Gastrocnemius medialis (tissue), 4 donors: ENCODE measurements at regions of chr18 and their contacts with region 1.

Region 1: DNA sequence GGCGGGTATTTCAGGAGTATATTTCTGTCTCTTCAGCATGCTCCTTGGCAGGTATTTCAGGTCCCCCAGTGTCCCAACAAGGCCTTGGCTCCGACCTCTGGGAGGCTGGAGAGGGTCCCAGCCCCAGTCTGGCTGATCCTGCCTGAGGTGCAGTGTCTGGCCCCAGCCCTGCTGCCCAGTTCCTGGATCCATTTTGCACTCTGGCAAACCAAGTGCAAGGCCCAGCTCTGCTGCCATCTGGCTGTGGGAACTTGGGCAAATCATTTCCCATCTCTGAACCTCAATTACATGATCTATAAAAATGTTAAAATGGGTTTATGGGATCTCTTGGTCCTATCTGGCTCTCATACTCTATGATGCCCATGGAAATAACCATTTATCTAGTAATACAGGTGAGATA is 63.6 kb downstream of the ZBTB7C start:
- DNase-seq: no peak
- ATAC-seq: no peak
- H3K4me3 ChIP-seq: no peak overlapping the region
- H3K27ac ChIP-seq: no peak overlapping the region
- H3K4me1 ChIP-seq: peaks cover 0 to 5% of the 10 kb centered on the region in 2 donors
- H3K27me3 ChIP-seq: no peaks in the 10 kb centered on the region
- CTCF ChIP-seq: peak in 3 of 5 experiments; percentile 21 to 47 (median 34)
- POLR2A ChIP-seq: no peak

Region 2: DNA sequence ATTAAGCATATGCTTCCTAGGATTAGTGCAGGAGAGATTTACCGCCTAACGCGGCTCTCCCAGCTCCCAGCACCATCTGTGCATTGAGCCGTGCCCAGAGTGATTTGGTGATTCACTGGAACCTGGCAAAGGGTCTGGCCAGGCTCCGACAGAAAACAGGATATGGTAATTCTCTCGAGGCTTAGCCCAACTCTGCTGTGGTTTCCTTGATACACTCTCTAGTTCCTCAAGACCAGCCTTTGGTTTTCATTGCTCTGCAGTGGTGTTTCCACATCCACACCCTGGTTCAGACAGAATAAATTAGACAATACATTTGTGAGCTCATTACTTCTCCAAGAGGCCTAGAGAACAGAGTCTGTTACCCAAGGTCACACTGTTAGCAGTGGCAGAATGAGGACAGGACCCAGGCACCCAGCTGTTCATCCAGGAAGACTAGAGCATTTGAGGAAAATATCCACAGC is 392.1 kb before region 1 on chr18:
- in situ Hi-C with region 1: no loop called
- intact Hi-C with region 1: no loop called
- DNase-seq: peak; percentile 9 to 31
- ATAC-seq: peak in 1 of 2 donors; percentile 80
- H3K4me3 ChIP-seq: no peak overlapping the region
- H3K27ac ChIP-seq: no peak overlapping the region
- H3K4me1 ChIP-seq: peaks cover 0 to 8% of the 10 kb centered on the region in 2 donors
- H3K27me3 ChIP-seq: no peaks in the 10 kb centered on the region
- CTCF ChIP-seq: no peak
- POLR2A ChIP-seq: no peak

Region 3: GRCh38 chr18:48030616-48031480 is 314.7 kb before region 1 on chr18:
- in situ Hi-C with region 1: loop called in 1 of 4 experiments (anchors 10 kb)
- intact Hi-C with region 1: no loop called
- DNase-seq: peak in 1 of 2 donors; percentile 25
- ATAC-seq: peak; percentile 73 to 79
- H3K4me3 ChIP-seq: no peak overlapping the region
- H3K27ac ChIP-seq: no peak overlapping the region
- H3K4me1 ChIP-seq: no peaks in the 10 kb centered on the region
- H3K27me3 ChIP-seq: no peaks in the 10 kb centered on the region
- CTCF ChIP-seq: peak; percentile 39 to 65 (median 54)
- POLR2A ChIP-seq: no peak

Region 4: DNA sequence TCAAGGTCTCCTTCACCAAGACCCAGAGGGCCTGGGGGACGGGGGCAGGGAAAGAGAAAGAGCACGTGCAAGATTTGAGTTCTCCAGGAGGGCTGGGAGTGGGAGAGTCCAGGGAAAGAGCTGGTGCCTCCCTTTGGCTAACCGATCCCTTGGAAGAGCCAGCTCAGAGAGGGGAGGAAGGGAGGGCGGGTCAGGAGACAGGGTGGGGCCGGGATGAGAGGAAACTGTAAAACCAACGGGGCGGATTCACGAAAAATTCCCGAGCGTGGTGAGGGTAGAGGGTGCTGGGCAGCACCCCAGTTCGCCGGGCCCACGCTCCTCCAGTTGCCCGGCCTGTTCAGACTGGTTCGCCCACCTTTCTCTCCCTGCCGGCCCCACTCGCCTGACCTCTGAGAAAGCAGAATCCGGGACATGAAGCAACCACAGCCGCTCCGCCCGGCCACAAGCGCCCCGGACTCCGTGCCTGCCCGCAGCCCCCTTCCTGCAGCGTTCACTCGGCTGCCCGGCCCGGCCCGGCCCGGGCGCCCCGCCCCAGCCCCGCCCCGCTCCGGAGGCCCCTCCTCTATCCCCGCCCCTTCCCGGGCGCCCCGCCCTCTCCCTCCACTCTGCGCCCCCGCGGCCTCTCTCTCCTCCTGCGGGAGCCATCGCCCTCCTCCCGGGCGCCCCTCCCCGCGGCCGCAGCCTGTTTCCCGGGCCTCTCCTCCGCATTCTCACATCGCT is 184.2 kb before region 1 on chr18:
- in situ Hi-C with region 1: no loop called
- intact Hi-C with region 1: no loop called
- DNase-seq: peak; percentile 48 to 67
- ATAC-seq: peak; percentile 91 to 92
- H3K4me3 ChIP-seq: peak overlapping the region; percentile 50 to 83 (median 67)
- H3K27ac ChIP-seq: peak overlapping the region; percentile 47 to 80 (median 65)
- H3K4me1 ChIP-seq: peaks cover 0 to 4% of the 10 kb centered on the region in 2 donors
- H3K27me3 ChIP-seq: no peaks in the 10 kb centered on the region
- CTCF ChIP-seq: no peak
- POLR2A ChIP-seq: peak in 1 of 2 donors; percentile 14

Region 5: GRCh38 chr18:48230467-48231113 is 115.0 kb before region 1 on chr18:
- in situ Hi-C with region 1: loop called in 1 of 4 experiments (anchors 10 kb)
- intact Hi-C with region 1: loop called (anchors 5 kb)
- DNase-seq: peak; percentile 27 to 64
- ATAC-seq: peak; percentile 76 to 85
- H3K4me3 ChIP-seq: no peak overlapping the region
- H3K27ac ChIP-seq: no peak overlapping the region
- H3K4me1 ChIP-seq: peaks cover 0 to 5% of the 10 kb centered on the region in 2 donors
- H3K27me3 ChIP-seq: no peaks in the 10 kb centered on the region
- CTCF ChIP-seq: peak; percentile 36 to 65 (median 62)
- POLR2A ChIP-seq: no peak